AG04450 (cell line): ENCODE measurements at regions of chr9 and their contacts with region 1.

Region 1: GRCh38 chr9:137534256-137535117 is 15.7 kb downstream of the PNPLA7 start:
- DNase-seq: no peak
- H3K4me3 ChIP-seq: no peak overlapping the region
- H3K27ac ChIP-seq: no peak overlapping the region
- H3K27me3 ChIP-seq: no peaks in the 10 kb centered on the region
- CTCF ChIP-seq: peak; percentile 79

Region 2: GRCh38 chr9:137266162-137266527 is 268.3 kb before region 1 on chr9:
- CTCF ChIA-PET with region 1: no interaction called
- POLR2A ChIA-PET with region 1: no interaction called
- DNase-seq: no peak
- H3K4me3 ChIP-seq: no peak overlapping the region
- H3K27ac ChIP-seq: no peak overlapping the region
- H3K27me3 ChIP-seq: no peaks in the 10 kb centered on the region
- CTCF ChIP-seq: no peak

Region 3: GRCh38 chr9:137545123-137545522 is 10.6 kb after region 1 on chr9:
- CTCF ChIA-PET with region 1: interaction called, 12 read pairs
- POLR2A ChIA-PET with region 1: no interaction called
- DNase-seq: no peak
- H3K4me3 ChIP-seq: no peak overlapping the region
- H3K27ac ChIP-seq: no peak overlapping the region
- H3K27me3 ChIP-seq: peaks cover 4% of the 10 kb centered on the region
- CTCF ChIP-seq: no peak

Region 4: DNA sequence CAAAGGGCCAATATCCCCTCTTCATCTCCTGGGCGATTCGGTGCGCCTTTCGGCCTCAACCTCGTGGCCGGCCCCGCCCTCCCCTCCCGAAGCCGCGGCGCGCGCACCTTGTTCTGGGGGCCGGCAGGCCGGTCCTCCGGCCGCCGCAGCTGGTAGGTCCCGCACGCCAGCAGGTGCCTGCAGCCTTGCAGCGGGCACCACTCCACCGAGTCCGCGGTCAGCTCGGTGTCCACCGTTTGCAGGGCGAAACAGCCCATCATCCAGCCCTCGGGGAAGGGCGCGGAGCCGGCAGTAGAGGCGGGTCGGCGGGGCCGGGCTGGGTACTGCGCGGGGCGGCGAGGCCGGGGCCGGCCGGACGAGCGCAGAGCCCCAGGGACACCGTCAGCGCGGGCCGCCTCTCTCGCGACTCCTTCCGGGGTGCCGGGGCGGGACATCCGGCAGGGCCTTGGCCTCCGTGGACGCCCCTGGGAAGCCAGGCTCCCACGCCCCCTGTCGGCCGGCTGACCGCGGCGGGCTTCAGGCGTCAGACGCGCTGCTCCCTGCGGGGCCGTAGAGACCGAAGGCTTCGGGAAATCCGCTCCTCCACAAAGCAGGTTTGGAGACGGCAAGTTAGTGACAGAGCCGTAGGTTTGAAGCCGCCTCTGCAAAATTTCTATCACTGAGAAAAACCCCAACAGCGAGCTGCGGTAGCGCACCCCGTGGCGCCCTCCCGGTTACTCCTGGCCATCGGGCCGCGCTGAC is 44.2 kb after region 1 on chr9 and contains the start of gene DPH7:
- CTCF ChIA-PET with region 1: interaction called, 12 read pairs
- POLR2A ChIA-PET with region 1: no interaction called
- DNase-seq: peak; percentile 63
- H3K4me3 ChIP-seq: peak within 1 kb of the TSS; percentile 91
- H3K27ac ChIP-seq: peak within 1 kb of the TSS; percentile 75
- H3K27me3 ChIP-seq: no peaks in the 10 kb centered on the region
- CTCF ChIP-seq: peak; percentile 82
- polyA plus RNA-seq, gene DPH7: 19.5 and 21.9 TPM in 2 replicates